PC-3 (cell line): ENCODE measurements at regions of chr13 and their contacts with region 1.

Region 1: DNA sequence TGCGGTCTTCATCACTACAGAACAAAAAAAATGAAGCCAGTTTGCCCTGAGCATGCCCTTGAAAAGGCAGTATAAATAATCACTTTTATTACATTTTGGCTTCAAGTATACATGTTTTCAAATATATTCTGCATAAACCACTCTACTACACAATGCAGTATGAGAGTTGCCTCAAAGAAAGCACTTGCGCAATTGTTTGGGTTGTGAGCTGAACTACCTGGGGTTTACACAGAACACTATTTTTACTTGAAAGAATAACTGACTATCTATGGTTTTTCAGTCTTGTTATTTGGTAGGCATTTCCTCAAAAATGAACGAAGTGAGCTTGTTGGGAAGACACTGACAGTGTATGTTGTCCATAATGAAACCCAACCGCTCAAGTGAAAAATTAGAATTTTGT is 264.4 kb upstream of the KLF12 start:
- DNase-seq: no peak
- ATAC-seq: no peak
- H3K4me3 ChIP-seq: no peak overlapping the region
- H3K27ac ChIP-seq: no peak overlapping the region
- H3K4me1 ChIP-seq: no peaks in the 10 kb centered on the region
- H3K27me3 ChIP-seq: no peaks in the 10 kb centered on the region
- CTCF ChIP-seq: no peak

Region 2: DNA sequence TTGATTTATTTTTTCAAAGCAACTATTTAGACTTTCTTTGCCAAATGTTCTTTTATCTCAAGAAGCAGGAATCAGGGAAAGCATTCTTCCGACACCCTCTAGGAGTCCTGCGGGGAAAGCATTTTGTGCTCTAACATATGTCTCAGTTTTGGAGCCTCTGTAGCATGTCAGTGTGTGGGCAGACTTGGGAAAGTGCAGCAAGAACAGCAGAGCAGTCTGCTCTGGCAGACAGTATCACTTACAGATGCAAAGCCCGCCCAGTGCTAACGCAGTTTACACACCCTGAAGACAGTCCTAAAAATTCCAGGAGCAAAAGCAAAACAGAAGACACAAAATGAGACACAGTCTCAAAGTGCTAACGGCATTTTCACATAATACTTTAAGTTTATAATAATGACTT is 657.9 kb before region 1 on chr13:
- CTCF ChIA-PET with region 1: no interaction called
- POLR2A ChIA-PET with region 1: interaction called, 15 read pairs
- intact Hi-C with region 1: no loop called
- DNase-seq: no peak
- ATAC-seq: no peak
- H3K4me3 ChIP-seq: no peak overlapping the region
- H3K27ac ChIP-seq: no peak overlapping the region
- H3K4me1 ChIP-seq: no peaks in the 10 kb centered on the region
- H3K27me3 ChIP-seq: no peaks in the 10 kb centered on the region
- CTCF ChIP-seq: no peak

Region 3: DNA sequence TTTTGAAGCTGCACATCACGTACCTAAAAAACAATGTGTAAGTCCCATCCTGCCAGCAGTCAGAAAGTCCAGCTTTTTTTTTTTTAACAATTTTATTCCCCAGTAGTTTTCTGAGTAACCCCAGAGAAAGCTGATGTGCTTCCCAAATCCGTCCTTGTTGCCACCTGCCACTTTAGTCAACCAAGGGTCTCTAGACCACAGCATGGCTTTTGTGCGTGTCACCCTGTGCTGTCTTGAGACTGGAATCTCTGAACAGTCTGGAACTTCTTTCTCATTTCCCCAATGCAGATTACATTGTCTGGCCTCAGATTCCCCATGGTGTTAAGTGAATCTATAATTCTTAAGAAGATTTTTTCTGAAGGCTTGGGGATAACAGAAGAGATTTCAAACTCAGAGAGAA is 24.8 kb after region 1 on chr13:
- CTCF ChIA-PET with region 1: no interaction called
- POLR2A ChIA-PET with region 1: no interaction called
- intact Hi-C with region 1: no loop called
- DNase-seq: no peak
- ATAC-seq: no peak
- H3K4me3 ChIP-seq: no peak overlapping the region
- H3K27ac ChIP-seq: no peak overlapping the region
- H3K4me1 ChIP-seq: no peaks in the 10 kb centered on the region
- H3K27me3 ChIP-seq: no peaks in the 10 kb centered on the region
- CTCF ChIP-seq: no peak